Esophagus muscularis mucosa (tissue), 4 donors: ENCODE measurements at regions of chr6 and their contacts with region 1.

Region 1: DNA sequence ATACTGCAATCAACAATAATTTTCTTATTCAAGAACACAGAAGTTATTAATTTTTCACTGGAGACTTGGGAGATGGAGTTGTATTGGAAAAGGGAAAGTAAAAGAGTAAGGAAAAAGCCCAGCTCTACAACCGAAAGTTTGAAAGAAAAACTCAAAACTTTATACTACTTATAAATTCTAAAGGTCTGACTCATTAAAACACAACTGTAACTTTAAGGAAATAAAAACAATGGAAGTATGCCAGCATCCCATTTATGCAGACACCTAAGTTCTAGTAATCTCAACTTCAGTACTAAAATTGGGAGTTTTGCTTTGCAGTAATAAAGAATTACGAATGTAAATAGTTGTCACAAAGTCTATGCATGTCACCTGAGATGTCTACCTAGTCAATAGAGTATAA is 80.6 kb downstream of the IRAK1BP1 start:
- DNase-seq: no peak
- H3K4me3 ChIP-seq: no peak overlapping the region
- H3K27ac ChIP-seq: no peak overlapping the region
- H3K4me1 ChIP-seq: no peaks in the 10 kb centered on the region
- H3K27me3 ChIP-seq: no peaks in the 10 kb centered on the region
- CTCF ChIP-seq: no peak
- EP300 ChIP-seq: no peak
- POLR2A ChIP-seq: no peak

Region 2: GRCh38 chr6:78896227-78896626 is 51.7 kb before region 1 on chr6:
- intact Hi-C with region 1: no loop called
- DNase-seq: no peak
- H3K4me3 ChIP-seq: no peak overlapping the region
- H3K27ac ChIP-seq: no peak overlapping the region
- H3K4me1 ChIP-seq: peaks cover 0 to 3% (median 0%) of the 10 kb centered on the region in 4 donors
- H3K27me3 ChIP-seq: no peaks in the 10 kb centered on the region
- CTCF ChIP-seq: no peak
- EP300 ChIP-seq: no peak
- POLR2A ChIP-seq: no peak

Region 3: GRCh38 chr6:78984225-78984950 is 36.4 kb after region 1 on chr6:
- intact Hi-C with region 1: loop called (anchors 5 kb)
- DNase-seq: no peak
- H3K4me3 ChIP-seq: no peak overlapping the region
- H3K27ac ChIP-seq: no peak overlapping the region
- H3K4me1 ChIP-seq: no peaks in the 10 kb centered on the region
- H3K27me3 ChIP-seq: no peaks in the 10 kb centered on the region
- CTCF ChIP-seq: no peak
- EP300 ChIP-seq: no peak
- POLR2A ChIP-seq: no peak

Region 4: GRCh38 chr6:78995946-78996345 is 48.0 kb after region 1 on chr6:
- intact Hi-C with region 1: no loop called
- DNase-seq: no peak
- H3K4me3 ChIP-seq: no peak overlapping the region
- H3K27ac ChIP-seq: no peak overlapping the region
- H3K4me1 ChIP-seq: no peaks in the 10 kb centered on the region
- H3K27me3 ChIP-seq: no peaks in the 10 kb centered on the region
- CTCF ChIP-seq: no peak
- EP300 ChIP-seq: no peak
- POLR2A ChIP-seq: no peak

Region 5: GRCh38 chr6:79170959-79171358 is 223.0 kb after region 1 on chr6:
- intact Hi-C with region 1: no loop called
- DNase-seq: no peak
- H3K4me3 ChIP-seq: no peak overlapping the region
- H3K27ac ChIP-seq: no peak overlapping the region
- H3K4me1 ChIP-seq: peaks cover 0 to 18% (median 12%) of the 10 kb centered on the region in 4 donors
- H3K27me3 ChIP-seq: no peaks in the 10 kb centered on the region
- CTCF ChIP-seq: no peak
- EP300 ChIP-seq: no peak
- POLR2A ChIP-seq: no peak